Activated T-helper 1 cell treated with anti-CD3 and anti-CD28 coated beads, Interleukin-12 subunit alpha, Interleukin-12 subunit beta, Interleukin-2, Interleukin-4 antibody, amounts not matched to agents 30 ng/mL and 10 ng/mL and 1 ng/mL, durations not matched to agents 14 hours and 24 hours and 36 hours (primary cell): ENCODE measurements at regions of chrX and their contacts with region 1.

Region 1: DNA sequence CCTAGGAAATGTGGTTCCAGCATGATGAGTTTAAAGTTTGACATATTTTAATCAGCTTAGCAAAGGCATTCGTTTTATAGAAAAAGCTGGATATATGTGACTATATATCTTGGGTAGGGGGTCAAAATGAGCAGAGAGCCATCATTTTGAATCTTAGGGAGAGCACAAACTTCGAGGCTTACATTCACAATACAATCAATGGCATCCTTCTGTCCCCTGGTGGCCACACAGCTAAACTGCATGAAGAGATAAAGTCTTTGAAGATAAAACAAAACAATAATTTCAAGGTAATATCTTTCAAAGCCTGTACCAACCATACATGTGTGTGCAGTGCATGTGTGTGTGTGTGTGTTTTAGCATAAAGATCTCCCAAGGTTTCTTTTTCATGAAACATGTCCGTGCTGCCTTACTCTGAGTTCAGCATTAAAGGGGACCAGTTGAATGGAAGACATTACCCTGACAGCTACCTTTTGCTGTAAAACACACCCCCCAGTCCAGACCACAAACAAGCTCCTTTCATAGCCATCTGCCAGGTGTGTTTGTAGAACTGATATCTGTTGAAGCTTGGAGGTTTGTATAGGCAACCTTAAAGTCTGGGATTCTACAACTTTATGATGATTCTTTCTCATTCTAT is 22.0 kb downstream of the DYNLT3 start:
- DNase-seq: peak; percentile 17
- H3K4me3 Mint-ChIP-seq: no peak overlapping the region
- H3K27ac Mint-ChIP-seq: no peak overlapping the region
- H3K4me1 Mint-ChIP-seq: peaks cover 30% of the 10 kb centered on the region
- H3K27me3 Mint-ChIP-seq: no peaks in the 10 kb centered on the region

Region 2: GRCh38 chrX:37509349-37509748 is 316.0 kb before region 1 on chrX:
- intact Hi-C with region 1: loop called (anchors 5 kb)
- DNase-seq: no peak
- H3K4me3 Mint-ChIP-seq: no peak overlapping the region
- H3K27ac Mint-ChIP-seq: no peak overlapping the region
- H3K4me1 Mint-ChIP-seq: no peaks in the 10 kb centered on the region
- H3K27me3 Mint-ChIP-seq: peaks cover 9% of the 10 kb centered on the region

Region 3: DNA sequence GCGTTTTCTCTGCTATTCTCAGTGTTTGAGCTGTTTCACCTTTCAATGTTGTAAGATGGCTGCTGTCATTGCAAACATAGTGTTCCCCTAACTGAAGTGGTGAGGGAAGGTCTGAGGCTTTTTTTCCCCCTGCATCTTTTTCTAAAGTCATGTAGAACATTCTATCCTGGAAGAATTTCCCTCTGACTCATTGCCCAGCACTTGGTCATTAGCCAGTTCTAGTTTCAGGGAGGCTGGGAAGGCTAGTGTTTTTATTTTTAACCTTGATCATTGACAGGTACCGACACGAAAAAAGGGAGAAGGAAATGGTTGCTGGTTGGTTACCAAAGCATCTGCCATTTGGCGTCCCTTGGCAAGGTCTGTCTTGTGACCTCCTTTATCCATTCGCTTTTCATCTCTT is 247.3 kb before region 1 on chrX:
- intact Hi-C with region 1: loop called (anchors 5 kb)
- DNase-seq: no peak
- H3K4me3 Mint-ChIP-seq: no peak overlapping the region
- H3K27ac Mint-ChIP-seq: no peak overlapping the region
- H3K4me1 Mint-ChIP-seq: peaks cover 4% of the 10 kb centered on the region
- H3K27me3 Mint-ChIP-seq: no peaks in the 10 kb centered on the region

Region 4: DNA sequence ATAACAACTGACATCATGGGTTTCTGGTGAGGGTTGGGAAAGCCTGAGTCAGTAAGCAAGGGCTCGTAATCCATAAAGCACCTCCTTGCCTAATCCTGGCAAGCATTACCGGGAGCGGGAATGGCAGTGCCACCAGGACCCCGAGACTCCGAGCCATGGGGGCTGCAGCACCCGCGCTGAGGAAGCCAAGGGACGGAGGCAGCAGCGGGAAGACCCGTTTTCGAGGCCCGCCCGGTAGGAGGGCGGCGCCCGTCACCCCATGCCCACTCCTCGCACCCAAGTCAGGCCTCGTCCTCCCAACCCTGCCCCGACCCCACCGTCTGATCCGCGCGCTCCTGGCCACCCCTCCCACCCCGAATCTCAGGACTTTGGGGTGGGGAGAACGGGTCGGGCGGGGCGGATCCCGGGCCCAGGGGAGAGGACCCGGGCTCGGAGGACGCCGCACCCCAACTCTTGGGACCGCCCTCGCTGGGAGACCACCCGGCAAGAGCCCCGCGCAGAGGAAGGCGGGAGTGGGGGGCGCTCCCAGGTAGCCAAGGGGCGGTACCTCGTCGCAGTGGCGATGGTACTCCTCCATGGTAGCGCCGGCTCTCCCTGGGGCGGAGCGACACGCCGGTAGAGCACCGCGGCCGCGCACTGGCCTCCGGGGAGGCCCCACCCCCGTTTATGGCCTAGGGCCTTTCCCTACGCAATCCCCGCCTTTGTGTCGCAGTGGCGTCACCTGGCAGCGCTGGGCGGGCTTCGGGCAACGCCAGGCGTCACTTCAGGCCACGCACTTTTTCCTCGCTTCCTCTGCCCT is 21.8 kb after region 1 on chrX and contains the start of gene DYNLT3:
- intact Hi-C with region 1: loop called (anchors 1 kb)
- DNase-seq: peak; percentile 75
- H3K4me3 Mint-ChIP-seq: peak within 1 kb of the TSS; percentile 80
- H3K27ac Mint-ChIP-seq: peak within 1 kb of the TSS; percentile 86
- H3K4me1 Mint-ChIP-seq: peaks cover 17% of the 10 kb centered on the region
- H3K27me3 Mint-ChIP-seq: no peaks in the 10 kb centered on the region
- total RNA-seq, gene DYNLT3: 15.3 and 16.7 TPM in 2 replicates

Region 5: GRCh38 chrX:37883196-37883595 is 57.9 kb after region 1 on chrX:
- intact Hi-C with region 1: no loop called
- DNase-seq: no peak
- H3K4me3 Mint-ChIP-seq: no peak overlapping the region
- H3K27ac Mint-ChIP-seq: no peak overlapping the region
- H3K4me1 Mint-ChIP-seq: no peaks in the 10 kb centered on the region
- H3K27me3 Mint-ChIP-seq: peaks cover 9% of the 10 kb centered on the region